Activated CD8-positive, alpha-beta T cell treated with anti-CD3 and anti-CD28 coated beads for 36 hours (primary cell): ENCODE measurements at regions of chr14 and their contacts with region 1.

Region 1: GRCh38 chr14:74905375-74906142 is 17.5 kb downstream of the RPS6KL1 start:
- DNase-seq: peak; percentile 84
- ATAC-seq: peak; percentile 81
- H3K4me3 Mint-ChIP-seq: no peak overlapping the region
- H3K27ac Mint-ChIP-seq: peak overlapping the region; percentile 55
- H3K4me1 Mint-ChIP-seq: peaks cover 10% of the 10 kb centered on the region
- H3K27me3 Mint-ChIP-seq: no peaks in the 10 kb centered on the region
- CTCF ChIP-seq: peak; percentile 97

Region 2: DNA sequence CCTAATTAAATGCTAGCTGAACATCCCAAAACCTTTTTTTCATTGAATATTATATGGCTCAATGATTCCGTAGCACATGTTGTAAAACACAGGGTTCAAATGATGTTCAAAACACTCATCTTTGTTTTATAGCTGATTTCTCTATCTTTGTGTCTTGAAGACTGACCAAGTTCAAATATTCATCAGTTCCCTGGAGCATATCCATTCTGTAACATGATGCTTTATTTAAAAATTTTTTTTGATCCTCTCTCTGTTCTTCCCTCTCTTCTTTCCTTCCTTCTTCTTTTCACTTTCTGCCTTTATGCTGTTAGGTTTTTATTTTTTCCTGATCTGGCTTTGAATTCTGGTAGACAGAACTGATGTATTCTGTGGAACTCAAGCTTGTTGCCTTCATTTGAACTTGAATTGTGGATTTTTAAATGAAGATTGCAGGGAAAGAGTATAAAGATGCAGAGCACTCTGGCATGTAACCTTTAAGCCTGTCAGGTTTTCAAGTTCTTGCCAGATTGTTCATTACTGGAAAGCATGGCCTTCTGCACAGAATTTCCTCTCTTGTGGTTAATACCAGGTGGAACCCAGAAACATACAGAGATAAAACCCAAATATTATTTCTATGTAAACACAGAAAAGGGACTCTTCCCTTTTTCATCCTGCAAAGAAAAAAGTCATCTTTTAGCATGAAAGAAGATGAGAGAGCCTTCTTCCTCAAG is 69.2 kb before region 1 on chr14:
- CTCF ChIA-PET with region 1: interaction called, 10 read pairs
- POLR2A ChIA-PET with region 1: no interaction called
- intact Hi-C with region 1: no loop called
- DNase-seq: no peak
- ATAC-seq: no peak
- H3K4me3 Mint-ChIP-seq: peak overlapping the region; percentile 6
- H3K27ac Mint-ChIP-seq: peak overlapping the region; percentile 88
- H3K4me1 Mint-ChIP-seq: peaks cover 67% of the 10 kb centered on the region
- H3K27me3 Mint-ChIP-seq: no peaks in the 10 kb centered on the region
- CTCF ChIP-seq: no peak

Region 3: DNA sequence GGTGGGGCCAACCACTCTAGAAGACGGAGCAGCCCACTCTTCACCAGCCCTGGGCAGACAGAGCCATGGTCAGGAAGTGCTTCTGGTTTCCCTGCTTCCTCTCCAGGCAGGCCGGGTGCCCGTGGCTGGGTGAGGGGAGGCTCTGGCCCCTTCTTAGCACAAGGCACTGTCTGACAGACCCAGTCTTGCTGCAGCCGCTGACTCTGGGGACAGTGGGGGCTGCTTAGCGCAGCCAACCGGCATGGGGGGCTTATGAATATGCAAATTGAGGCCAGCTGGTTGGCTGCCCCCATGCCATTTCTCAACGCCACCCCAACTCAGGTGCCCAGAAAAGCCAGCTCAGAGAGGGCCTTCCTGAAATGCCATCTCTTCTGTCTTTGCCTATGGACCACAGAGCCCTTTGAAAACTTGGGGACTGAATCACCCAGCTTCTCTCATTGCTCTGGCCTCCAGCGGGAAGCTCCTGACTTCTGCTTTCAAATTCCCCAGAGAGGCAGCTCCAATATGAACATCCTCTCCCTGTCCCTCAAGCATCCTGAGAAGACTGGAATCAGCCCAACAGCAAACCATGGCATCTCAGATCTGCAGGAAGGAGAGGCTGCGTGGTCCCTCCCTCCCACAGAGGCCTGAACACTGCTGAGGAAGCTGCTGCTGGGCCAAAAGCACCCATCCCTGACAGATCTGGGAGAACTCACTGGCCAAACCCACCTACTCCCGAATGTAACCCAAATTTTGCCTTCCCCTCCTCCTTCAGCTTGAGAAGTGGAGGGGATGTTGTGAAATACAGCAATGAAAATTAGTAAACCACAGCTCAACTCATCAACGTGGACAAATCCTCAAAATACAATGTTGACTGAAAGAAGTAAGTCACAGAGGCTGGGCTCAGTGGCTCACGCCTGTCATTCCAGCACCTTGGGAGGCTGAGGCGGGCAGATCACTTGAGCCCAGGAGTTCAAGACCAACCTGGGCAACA is 29.3 kb before region 1 on chr14 and contains the start of gene PROX2:
- CTCF ChIA-PET with region 1: interaction called, 64 read pairs
- POLR2A ChIA-PET with region 1: interaction called, 14 read pairs
- intact Hi-C with region 1: no loop called
- DNase-seq: peak; percentile 43
- ATAC-seq: peak; percentile 71
- H3K4me3 Mint-ChIP-seq: peak within 1 kb of the TSS; percentile 46
- H3K27ac Mint-ChIP-seq: peak within 1 kb of the TSS; percentile 59
- H3K4me1 Mint-ChIP-seq: peaks cover 33% of the 10 kb centered on the region
- H3K27me3 Mint-ChIP-seq: no peaks in the 10 kb centered on the region
- CTCF ChIP-seq: no peak
- total RNA-seq, gene PROX2: 0.38 to 0.65 TPM

Region 4: GRCh38 chr14:74881431-74882361 is 23.9 kb before region 1 on chr14 and contains the start of gene DLST:
- CTCF ChIA-PET with region 1: interaction called, 64 read pairs
- POLR2A ChIA-PET with region 1: interaction called, 14 read pairs
- intact Hi-C with region 1: no loop called
- DNase-seq: peak; percentile 88
- ATAC-seq: peak; percentile 92
- H3K4me3 Mint-ChIP-seq: peak within 1 kb of the TSS; percentile 96
- H3K27ac Mint-ChIP-seq: peak within 1 kb of the TSS; percentile 91
- H3K4me1 Mint-ChIP-seq: peaks cover 58% of the 10 kb centered on the region
- H3K27me3 Mint-ChIP-seq: no peaks in the 10 kb centered on the region
- CTCF ChIP-seq: no peak
- total RNA-seq, gene DLST: 110 to 113 TPM

Region 5: GRCh38 chr14:74888164-74889158 is 17.1 kb before region 1 on chr14:
- CTCF ChIA-PET with region 1: interaction called, 73 read pairs
- POLR2A ChIA-PET with region 1: interaction called, 14 read pairs
- intact Hi-C with region 1: no loop called
- DNase-seq: no peak
- ATAC-seq: no peak
- H3K4me3 Mint-ChIP-seq: no peak overlapping the region
- H3K27ac Mint-ChIP-seq: peak overlapping the region; percentile 46
- H3K4me1 Mint-ChIP-seq: peaks cover 40% of the 10 kb centered on the region
- H3K27me3 Mint-ChIP-seq: no peaks in the 10 kb centered on the region
- CTCF ChIP-seq: no peak

Region 6: GRCh38 chr14:74893614-74894091 is 11.9 kb before region 1 on chr14:
- CTCF ChIA-PET with region 1: interaction called, 73 read pairs
- POLR2A ChIA-PET with region 1: interaction called, 8 read pairs
- intact Hi-C with region 1: no loop called
- DNase-seq: no peak
- ATAC-seq: no peak
- H3K4me3 Mint-ChIP-seq: no peak overlapping the region
- H3K27ac Mint-ChIP-seq: peak overlapping the region; percentile 34
- H3K4me1 Mint-ChIP-seq: no peaks in the 10 kb centered on the region
- H3K27me3 Mint-ChIP-seq: no peaks in the 10 kb centered on the region
- CTCF ChIP-seq: no peak

Region 7: DNA sequence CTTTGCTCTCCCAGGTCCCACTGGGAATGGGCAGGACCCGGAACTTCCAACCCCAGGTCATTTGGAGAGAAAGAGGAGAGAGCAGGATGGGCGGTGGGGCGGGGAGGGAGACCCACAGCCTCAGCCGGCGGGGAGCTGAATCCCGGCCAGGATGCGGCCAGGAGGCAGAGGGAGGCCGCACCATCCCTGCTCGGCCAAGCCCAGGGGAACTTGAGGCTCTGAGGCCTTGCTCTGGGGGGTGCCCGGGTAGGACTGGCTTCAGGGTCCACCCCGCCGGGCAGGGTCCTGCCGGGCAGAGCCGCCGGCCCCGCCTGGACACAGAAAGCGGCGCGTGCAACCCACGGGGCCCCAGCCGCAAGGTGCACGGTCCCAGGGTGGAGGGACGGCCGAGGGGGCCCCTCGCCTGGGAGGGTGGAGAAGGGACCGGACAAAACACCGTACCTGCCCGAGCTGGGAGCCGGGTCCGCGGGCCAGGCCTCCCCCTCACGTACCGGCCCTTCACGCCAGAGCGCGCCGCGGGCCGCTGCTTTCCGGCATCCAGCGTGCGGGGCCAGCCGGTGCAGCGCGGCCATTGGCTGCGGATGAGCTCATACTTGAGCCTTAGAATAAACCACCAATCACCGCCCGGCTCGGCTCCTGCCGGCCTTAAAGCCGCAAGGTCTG is 17.3 kb after region 1 on chr14 and contains the start of gene RPS6KL1:
- CTCF ChIA-PET with region 1: interaction called, 10 read pairs
- POLR2A ChIA-PET with region 1: interaction called, 6 read pairs
- intact Hi-C with region 1: no loop called
- DNase-seq: peak; percentile 88
- ATAC-seq: peak; percentile 99
- H3K4me3 Mint-ChIP-seq: peak within 1 kb of the TSS; percentile 68
- H3K27ac Mint-ChIP-seq: peak within 1 kb of the TSS; percentile 39
- H3K4me1 Mint-ChIP-seq: peaks cover 8% of the 10 kb centered on the region
- H3K27me3 Mint-ChIP-seq: peaks cover 8% of the 10 kb centered on the region
- CTCF ChIP-seq: no peak
- total RNA-seq, gene RPS6KL1: 4.1 to 5.1 TPM